MCF 10A (cell line): ENCODE measurements at regions of chr6 and their contacts with region 1.

Region 1: GRCh38 chr6:28838634-28839442 is 84.9 kb downstream of the TRIM27 start:
- DNase-seq: peak; percentile 88
- H3K4me3 Mint-ChIP-seq: peak overlapping the region; percentile 92
- H3K27ac Mint-ChIP-seq: peak overlapping the region; percentile 46
- H3K4me1 Mint-ChIP-seq: peaks cover 6% of the 10 kb centered on the region
- H3K27me3 Mint-ChIP-seq: no peaks in the 10 kb centered on the region
- CTCF ChIP-seq: peak; percentile 62

Region 2: DNA sequence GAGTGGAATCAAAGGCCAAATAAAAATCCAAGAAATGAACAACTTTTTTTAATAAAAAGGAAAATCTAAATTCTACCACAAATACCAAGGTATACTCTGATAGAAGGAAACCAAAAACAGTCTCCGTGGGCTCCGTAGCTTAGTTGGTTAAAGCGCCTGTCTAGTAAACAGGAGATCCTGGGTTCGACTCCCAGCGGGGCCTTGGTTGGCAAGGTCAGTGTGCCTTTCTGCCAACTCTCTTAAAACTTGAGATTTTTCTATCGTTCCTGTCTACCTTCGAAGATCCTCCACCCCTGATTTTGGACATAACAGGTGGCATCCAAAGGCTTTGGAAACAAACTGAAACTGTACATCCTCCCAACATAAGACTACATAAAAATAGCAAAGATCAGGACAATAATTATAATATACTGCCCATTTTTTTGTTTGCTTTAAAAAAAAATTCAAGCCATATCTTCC is 112.9 kb before region 1 on chr6:
- CTCF ChIA-PET with region 1: interaction called, 6 read pairs
- POLR2A ChIA-PET with region 1: interaction called, 19 read pairs
- intact Hi-C with region 1: no loop called
- DNase-seq: no peak
- H3K4me3 Mint-ChIP-seq: no peak overlapping the region
- H3K27ac Mint-ChIP-seq: no peak overlapping the region
- H3K4me1 Mint-ChIP-seq: peaks cover 3% of the 10 kb centered on the region
- H3K27me3 Mint-ChIP-seq: no peaks in the 10 kb centered on the region
- CTCF ChIP-seq: no peak

Region 3: DNA sequence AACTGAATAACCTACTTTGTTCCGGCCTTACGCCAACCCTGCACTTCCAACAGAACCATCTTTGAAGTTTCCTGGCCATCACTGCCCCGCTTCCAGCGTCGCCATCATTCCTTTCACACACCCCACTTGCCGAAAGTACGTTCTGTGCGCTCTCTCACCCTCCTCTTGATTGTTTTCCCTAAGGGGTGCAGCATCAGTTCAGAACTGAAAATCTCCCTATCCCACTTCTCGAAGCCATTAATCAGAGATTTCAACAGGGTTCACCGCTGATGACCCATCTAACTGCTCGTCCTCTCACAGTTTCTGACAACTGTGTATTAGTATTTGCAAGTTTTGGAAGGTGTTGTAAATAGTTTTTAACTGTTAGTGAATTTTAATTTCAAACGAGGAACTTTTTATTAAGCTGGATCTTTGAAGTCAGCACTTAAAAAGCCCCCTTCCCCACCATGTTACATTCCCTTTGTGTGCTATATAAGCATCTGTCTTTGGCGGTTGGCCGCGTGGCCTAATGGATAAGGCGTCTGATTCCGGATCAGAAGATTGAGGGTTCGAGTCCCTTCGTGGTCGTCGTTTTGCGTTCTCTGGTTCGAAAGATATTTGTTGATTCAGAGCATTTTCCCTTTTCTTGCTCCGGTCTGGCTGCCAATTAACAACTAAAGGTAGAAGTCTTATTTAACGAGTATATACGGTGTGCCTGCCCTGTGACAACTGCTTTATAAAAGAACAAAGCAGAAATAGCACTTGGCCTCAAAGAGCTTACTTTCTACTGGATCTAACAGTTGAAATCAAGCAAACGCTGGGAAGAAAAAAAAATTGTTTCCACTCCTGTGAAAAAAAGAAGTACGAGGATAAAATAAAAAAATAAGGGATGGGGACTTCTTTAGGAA is 42.3 kb after region 1 on chr6:
- CTCF ChIA-PET with region 1: interaction called, 8 read pairs
- POLR2A ChIA-PET with region 1: interaction called, 18 read pairs
- intact Hi-C with region 1: no loop called
- DNase-seq: peak; percentile 78
- H3K4me3 Mint-ChIP-seq: peak overlapping the region; percentile 86
- H3K27ac Mint-ChIP-seq: peak overlapping the region; percentile 8
- H3K4me1 Mint-ChIP-seq: peaks cover 6% of the 10 kb centered on the region
- H3K27me3 Mint-ChIP-seq: peaks cover 21% of the 10 kb centered on the region
- CTCF ChIP-seq: no peak

Region 4: DNA sequence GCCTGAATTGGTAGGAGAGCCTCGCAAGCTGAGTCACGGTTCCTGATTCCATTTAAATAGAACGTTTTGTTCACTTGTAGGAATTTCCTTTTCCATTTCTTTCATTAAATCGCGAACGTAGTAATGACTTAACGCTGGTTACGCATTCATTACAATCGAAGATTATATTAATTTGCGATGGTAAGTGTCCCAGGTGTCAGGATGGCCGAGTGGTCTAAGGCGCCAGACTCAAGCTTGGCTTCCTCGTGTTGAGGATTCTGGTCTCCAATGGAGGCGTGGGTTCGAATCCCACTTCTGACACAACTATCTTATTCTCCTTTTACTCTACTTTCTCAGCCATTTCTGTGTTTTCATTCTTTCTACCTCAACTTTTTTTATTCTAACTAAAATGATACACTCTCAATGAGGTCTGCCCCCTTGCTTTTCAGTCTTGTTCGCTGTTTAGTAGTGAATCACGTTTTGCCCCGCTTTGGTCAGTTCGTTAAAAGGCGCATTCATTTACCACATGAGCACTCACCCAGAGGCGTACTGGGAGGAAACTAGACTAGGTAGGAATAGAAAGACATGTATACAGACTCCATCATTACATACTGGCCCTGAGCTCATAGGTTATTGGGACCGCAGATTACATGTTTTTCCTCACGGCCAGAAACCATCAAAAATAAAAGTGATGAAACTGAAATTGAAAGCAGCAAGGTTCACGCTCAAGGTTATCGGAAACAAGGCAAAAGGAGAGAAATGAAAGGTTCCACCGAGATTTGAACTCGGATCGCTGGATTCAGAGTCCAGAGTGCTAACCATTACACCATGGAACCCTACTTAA is 102.2 kb after region 1 on chr6:
- CTCF ChIA-PET with region 1: interaction called, 27 read pairs
- POLR2A ChIA-PET with region 1: interaction called, 27 read pairs
- intact Hi-C with region 1: loop called (anchors 1 kb)
- DNase-seq: peak; percentile 90
- H3K4me3 Mint-ChIP-seq: peak overlapping the region; percentile 83
- H3K27ac Mint-ChIP-seq: peak overlapping the region; percentile 57
- H3K4me1 Mint-ChIP-seq: peaks cover 7% of the 10 kb centered on the region
- H3K27me3 Mint-ChIP-seq: no peaks in the 10 kb centered on the region
- CTCF ChIP-seq: no peak

Region 5: DNA sequence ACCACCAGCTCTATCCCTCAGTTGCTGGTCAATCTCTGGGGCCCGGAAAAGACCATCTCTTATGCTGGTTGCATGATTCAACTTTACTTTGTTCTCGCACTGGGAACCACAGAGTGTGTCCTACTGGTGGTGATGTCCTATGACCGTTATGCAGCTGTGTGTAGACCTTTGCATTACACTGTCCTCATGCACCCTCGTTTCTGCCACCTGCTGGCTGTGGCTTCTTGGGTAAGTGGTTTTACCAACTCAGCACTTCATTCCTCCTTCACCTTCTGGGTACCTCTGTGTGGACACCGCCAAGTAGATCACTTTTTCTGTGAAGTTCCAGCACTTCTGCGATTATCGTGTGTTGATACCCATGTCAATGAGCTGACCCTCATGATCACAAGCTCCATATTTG is 273.3 kb after region 1 on chr6:
- CTCF ChIA-PET with region 1: no interaction called
- POLR2A ChIA-PET with region 1: no interaction called
- intact Hi-C with region 1: loop called (anchors 2 kb)
- DNase-seq: peak; percentile 16
- H3K4me3 Mint-ChIP-seq: no peak overlapping the region
- H3K27ac Mint-ChIP-seq: no peak overlapping the region
- H3K4me1 Mint-ChIP-seq: no peaks in the 10 kb centered on the region
- H3K27me3 Mint-ChIP-seq: peaks cover 64% of the 10 kb centered on the region
- CTCF ChIP-seq: no peak